ENCODE measurements at regions of chr1 and their contacts with region 1.

Region 1: GRCh38 chr1:110338886-110339406 is at the start of gene RBM15:
- DNase-seq: peak; percentile 96
- CTCF ChIP-seq: no peak

Region 2: DNA sequence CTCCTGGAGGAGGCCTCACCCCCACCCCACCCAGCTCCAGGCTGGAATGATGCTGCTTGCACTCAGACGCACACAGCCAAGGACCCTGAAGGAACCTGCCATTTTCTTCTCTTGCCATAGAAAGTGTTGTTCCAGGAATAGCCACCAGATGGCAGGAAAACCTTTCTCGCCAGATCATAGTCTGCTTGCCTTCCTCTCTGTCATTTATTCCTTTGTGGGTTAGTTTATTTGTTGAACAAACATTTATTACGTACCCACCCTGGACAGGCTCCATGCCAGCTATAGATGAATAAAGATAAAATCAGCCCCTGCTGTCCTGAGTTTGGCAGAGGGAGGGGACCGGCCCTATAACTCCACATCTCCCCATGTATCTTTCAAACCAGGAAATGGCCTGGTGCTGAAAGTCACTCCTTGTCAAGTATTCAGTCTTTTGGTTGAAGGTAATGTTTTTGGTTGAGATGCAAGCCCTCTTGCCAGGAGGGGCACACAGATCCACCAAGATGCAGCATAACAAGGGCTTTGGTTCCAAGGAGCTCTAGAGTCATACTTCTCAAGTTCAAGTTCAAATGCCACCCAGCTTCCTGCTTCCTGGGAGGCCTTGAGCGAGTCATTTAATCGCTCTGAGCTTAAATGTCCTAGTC is 135.8 kb before region 1 on chr1:
- CTCF ChIA-PET with region 1: interaction called, 58 read pairs
- POLR2A ChIA-PET with region 1: no interaction called
- DNase-seq: peak; percentile 78
- CTCF ChIP-seq: peak; percentile 81

Region 3: GRCh38 chr1:110235834-110236682 is 102.9 kb before region 1 on chr1:
- CTCF ChIA-PET with region 1: no interaction called
- POLR2A ChIA-PET with region 1: no interaction called
- DNase-seq: no peak
- CTCF ChIP-seq: no peak

Region 4: DNA sequence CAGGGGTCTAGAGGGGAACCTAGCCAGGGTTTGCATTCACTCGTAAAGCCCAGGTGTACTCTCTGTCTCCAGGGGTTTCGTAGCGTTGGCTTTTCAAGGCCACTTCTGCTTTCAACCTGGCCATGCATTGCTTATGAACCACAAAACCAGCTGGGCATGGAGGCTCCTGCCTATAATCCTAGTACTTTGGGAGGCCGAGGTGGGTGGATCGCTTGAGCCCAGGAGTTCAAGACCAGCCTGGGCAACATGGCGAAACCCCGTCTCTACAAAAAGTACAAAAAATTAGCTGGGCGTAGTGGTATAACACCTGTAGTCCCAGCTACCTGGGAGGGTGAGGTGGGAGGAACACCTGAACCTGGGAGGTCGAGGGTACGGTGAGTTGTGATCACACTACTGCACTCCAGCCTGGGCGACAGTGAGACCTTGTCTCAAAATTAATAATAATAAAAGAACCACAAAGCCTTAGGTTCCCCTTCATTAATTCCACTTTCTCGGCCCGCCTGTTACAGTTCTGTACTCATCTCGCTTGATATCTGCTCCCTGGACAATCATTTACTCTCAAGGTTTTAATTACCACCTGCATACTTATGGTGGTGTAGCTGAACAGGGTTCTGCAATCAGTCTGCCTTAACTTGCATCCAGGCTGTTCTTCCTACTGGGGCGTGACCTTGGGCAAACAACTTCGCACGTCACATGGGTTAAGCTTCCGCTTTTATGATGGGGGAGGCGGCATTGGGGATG is 45.8 kb after region 1 on chr1:
- CTCF ChIA-PET with region 1: interaction called, 12 read pairs
- POLR2A ChIA-PET with region 1: interaction called, 7 read pairs
- DNase-seq: peak; percentile 41
- CTCF ChIP-seq: no peak

Region 5: DNA sequence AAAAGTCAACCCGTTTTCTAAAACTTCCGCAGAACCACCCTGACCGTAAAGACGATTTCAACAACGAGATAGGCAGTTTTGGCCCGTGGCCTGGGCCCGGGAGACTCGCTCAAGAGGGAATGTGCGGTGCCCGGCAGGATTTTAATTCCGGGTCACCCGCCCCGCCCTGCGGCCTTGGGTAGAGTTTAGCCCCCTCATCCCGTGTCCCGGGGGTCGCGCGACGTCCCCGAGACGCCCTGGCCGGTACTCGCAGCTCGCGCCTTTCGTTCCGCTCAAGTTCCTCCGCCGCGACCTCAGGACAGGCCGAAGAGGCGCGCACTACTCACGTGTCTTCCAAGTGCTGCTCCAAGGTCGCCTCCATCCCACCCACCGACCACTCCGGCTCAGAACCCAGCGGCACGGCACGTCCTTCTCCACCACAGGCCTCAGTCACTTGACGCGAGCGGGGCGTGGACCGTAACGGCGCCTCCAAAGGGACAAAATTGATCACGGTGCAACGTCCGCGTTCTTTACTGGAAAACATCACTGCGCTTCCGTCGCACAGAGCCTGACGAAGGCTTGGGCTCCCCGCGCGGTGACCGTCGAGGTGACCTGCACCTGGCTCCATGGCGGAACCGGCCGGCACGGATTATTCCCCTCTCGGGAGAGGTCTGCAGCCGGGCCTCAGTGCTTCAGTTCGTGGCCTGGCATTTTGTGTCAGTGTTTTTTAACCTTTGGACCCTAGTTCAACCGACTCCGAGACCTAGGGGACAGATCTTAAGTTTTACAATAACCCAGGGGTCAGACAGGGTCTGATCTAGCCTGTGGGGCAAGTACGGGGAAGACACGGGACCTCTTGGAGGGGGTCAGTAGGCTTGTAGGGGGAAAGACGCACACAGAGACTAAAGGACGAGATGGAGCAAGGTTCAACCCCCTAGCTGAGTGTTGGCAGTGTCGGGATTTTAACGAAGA is 68.6 kb after region 1 on chr1 and contains the start of gene LAMTOR5:
- CTCF ChIA-PET with region 1: interaction called, 17 read pairs
- POLR2A ChIA-PET with region 1: interaction called, 3 read pairs
- DNase-seq: peak; percentile 91
- CTCF ChIP-seq: no peak

Measured in GM10248 (cell line).